ENCODE measurements at regions of chr7 and their contacts with region 1.

Region 1: GRCh38 chr7:112939574-112940314 is 146.9 kb downstream of the GPR85 start:
- DNase-seq: peak; percentile 98 to 100 (median 99)
- ATAC-seq: peak; percentile 96 to 98 (median 98)
- H3K4me3 ChIP-seq: peak overlapping the region; percentile 89 to 92
- H3K4me3 Mint-ChIP-seq: peak overlapping the region; percentile 86 to 95 (median 87)
- H3K27ac ChIP-seq: peak overlapping the region; percentile 69
- H3K27ac Mint-ChIP-seq: peak overlapping the region; percentile 96
- H3K4me1 ChIP-seq: peaks cover 15 to 20% of the 10 kb centered on the region in 2 experiments
- H3K4me1 Mint-ChIP-seq: peaks cover 46 to 51% (median 48%) of the 10 kb centered on the region in 3 donors
- H3K27me3 ChIP-seq: no peaks in the 10 kb centered on the region
- H3K27me3 Mint-ChIP-seq: no peaks in the 10 kb centered on the region

Region 2: DNA sequence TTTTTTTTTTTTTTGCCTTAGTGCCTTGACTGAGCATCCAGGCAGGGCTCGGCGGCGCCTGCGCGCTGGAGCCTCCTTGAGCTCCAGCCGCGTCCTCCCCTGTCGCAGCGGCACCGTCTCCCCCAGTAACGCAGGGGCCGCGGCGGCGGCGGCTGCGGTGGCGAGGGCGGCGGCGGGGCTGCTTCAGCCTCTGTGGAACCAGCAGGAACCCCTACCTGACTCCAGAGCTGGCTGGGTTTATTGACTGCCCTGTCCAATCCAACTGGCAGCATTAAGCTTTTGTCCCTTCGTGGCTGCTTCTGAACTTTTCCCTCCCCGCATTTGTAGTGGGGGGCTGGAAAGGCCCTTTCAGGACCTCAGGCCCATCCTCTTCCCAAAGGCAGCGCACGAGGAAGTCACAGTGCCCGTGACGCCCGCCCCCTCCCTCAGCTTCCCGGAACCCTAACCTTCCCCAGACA is 146.7 kb after region 1 on chr7 and contains the start of gene GPR85:
- CTCF ChIA-PET with region 1: interaction called in 1 of 2 experiments, 10 read pairs
- POLR2A ChIA-PET with region 1: no interaction called
- DNase-seq: peak in 29 of 35 experiments; percentile 1 to 45 (median 15)
- ATAC-seq: peak in 2 of 4 experiments; percentile 48 to 71
- H3K4me3 ChIP-seq: peak within 1 kb of the TSS; percentile 12 to 32
- H3K4me3 Mint-ChIP-seq: peak within 1 kb of the TSS in 2 of 3 donors; percentile 31 to 61
- H3K27ac ChIP-seq: no peak within 1 kb of the TSS
- H3K27ac Mint-ChIP-seq: no peak within 1 kb of the TSS
- H3K4me1 ChIP-seq: peaks cover 0 to 3% of the 10 kb centered on the region in 2 experiments
- H3K4me1 Mint-ChIP-seq: peaks cover 7 to 14% (median 13%) of the 10 kb centered on the region in 3 donors
- H3K27me3 ChIP-seq: peaks cover 4 to 11% of the 10 kb centered on the region in 2 experiments
- H3K27me3 Mint-ChIP-seq: peaks cover 21 to 44% of the 10 kb centered on the region in 2 donors
- total RNA-seq, gene GPR85: not detected

Region 3: DNA sequence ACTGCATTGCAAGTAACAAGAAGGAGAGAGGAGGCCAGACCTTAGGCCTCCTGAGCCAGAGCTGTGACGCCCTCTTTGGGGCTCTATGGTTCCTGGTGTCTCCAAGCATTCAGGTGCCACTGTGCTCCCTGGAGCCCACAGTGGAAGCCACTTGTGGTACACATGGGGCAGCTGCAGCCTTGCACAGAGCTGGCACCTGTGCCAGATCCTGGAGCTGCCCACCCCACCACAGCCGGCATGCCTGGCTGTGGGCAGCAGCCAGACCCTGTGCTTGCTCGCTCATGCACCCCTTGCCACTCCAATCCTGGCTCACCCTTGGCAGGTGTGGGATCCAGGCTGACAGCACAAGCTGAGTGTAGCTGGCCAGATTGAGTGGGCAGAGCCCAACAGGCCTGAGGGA is 352.4 kb after region 1 on chr7:
- CTCF ChIA-PET with region 1: no interaction called
- POLR2A ChIA-PET with region 1: no interaction called
- DNase-seq: no peak
- ATAC-seq: no peak
- H3K4me3 ChIP-seq: no peak overlapping the region
- H3K4me3 Mint-ChIP-seq: no peak overlapping the region
- H3K27ac ChIP-seq: no peak overlapping the region
- H3K27ac Mint-ChIP-seq: no peak overlapping the region
- H3K4me1 ChIP-seq: no peaks in the 10 kb centered on the region
- H3K4me1 Mint-ChIP-seq: no peaks in the 10 kb centered on the region
- H3K27me3 ChIP-seq: no peaks in the 10 kb centered on the region
- H3K27me3 Mint-ChIP-seq: no peaks in the 10 kb centered on the region

Region 4: DNA sequence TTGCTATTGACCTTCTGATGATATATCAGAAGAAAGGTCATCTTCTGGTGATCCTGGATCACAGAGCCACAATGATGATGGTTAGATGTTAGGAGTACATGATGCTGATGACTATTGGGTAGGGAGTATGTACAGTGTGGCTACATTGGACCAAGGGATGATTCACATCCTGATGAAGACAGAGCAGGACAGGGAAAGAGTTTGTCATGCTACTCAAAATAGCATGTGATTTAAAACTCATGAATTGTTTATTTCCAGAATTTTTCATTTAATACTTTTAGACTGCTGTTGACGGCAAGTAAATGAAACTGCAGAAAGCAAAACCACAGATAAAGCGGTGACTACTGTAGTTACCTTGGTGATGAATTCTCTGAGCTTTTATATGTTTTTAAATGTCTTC is 581.7 kb after region 1 on chr7:
- CTCF ChIA-PET with region 1: no interaction called
- POLR2A ChIA-PET with region 1: no interaction called
- DNase-seq: no peak
- ATAC-seq: no peak
- H3K4me3 ChIP-seq: no peak overlapping the region
- H3K4me3 Mint-ChIP-seq: no peak overlapping the region
- H3K27ac ChIP-seq: no peak overlapping the region
- H3K27ac Mint-ChIP-seq: no peak overlapping the region
- H3K4me1 ChIP-seq: no peaks in the 10 kb centered on the region
- H3K4me1 Mint-ChIP-seq: no peaks in the 10 kb centered on the region
- H3K27me3 ChIP-seq: no peaks in the 10 kb centered on the region
- H3K27me3 Mint-ChIP-seq: no peaks in the 10 kb centered on the region

Measured in T-cell (primary cell).